ENCODE measurements at regions of chr12 and their contacts with region 1.

Region 1: DNA sequence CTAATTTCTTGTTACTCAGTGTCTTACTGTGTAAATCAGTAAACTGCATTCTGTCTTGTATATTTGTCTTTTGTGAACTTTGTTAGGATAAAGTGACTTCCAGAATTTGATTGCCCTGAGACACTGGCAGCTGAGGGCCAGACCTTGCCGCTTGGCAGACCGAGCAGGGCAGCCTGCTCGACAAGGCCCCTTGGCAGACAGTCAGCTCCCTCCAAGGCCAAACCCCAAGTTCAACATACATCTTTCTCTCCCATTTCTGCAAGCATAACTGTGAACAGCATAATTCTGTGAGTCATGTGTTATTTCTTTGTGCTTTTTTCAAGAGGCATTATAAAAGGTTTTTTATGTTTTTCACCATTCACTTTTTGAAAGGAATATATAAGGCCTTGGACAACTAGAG is 39.2 kb upstream of the BMAL2 start:
- DNase-seq: peak; percentile 27
- H3K4me3 ChIP-seq: no peak overlapping the region
- H3K27ac ChIP-seq: peak overlapping the region; percentile 85
- H3K4me1 ChIP-seq: peaks cover 88% of the 10 kb centered on the region
- H3K27me3 ChIP-seq: no peaks in the 10 kb centered on the region
- CTCF ChIP-seq: no peak

Region 2: DNA sequence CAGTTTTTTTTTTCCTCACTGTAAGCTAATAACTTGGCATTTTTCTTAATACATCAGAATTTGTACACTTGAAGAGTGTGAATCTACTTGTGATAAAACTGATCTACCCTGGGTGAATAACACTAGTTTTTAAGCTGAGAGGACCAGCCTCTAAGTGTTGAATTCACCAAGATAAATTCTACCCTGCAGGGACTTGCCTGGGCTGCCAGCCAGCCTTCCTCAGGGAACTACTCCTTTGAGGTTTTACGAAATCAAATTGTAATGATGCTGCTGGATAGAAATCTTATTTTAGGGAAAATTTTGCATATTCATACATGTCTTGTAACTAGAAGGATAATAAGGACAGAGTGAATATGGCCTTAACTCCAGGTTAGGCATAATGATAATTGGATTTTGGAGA is 269.2 kb before region 1 on chr12:
- intact Hi-C with region 1: loop called (anchors 10 kb)
- DNase-seq: no peak
- H3K4me3 ChIP-seq: no peak overlapping the region
- H3K27ac ChIP-seq: no peak overlapping the region
- H3K4me1 ChIP-seq: peaks cover 34% of the 10 kb centered on the region
- H3K27me3 ChIP-seq: no peaks in the 10 kb centered on the region
- CTCF ChIP-seq: no peak

Region 3: GRCh38 chr12:27243804-27244683 is 49.4 kb before region 1 on chr12 and contains the start of gene STK38L:
- intact Hi-C with region 1: loop called (anchors 10 kb)
- DNase-seq: peak; percentile 98
- H3K4me3 ChIP-seq: peak within 1 kb of the TSS; percentile 91
- H3K27ac ChIP-seq: peak within 1 kb of the TSS; percentile 93
- H3K4me1 ChIP-seq: peaks cover 48% of the 10 kb centered on the region
- H3K27me3 ChIP-seq: no peaks in the 10 kb centered on the region
- CTCF ChIP-seq: peak; percentile 47
- total RNA-seq, gene STK38L: 75.4 TPM